ENCODE measurements at regions of chr6 and their contacts with region 1.

Region 1: DNA sequence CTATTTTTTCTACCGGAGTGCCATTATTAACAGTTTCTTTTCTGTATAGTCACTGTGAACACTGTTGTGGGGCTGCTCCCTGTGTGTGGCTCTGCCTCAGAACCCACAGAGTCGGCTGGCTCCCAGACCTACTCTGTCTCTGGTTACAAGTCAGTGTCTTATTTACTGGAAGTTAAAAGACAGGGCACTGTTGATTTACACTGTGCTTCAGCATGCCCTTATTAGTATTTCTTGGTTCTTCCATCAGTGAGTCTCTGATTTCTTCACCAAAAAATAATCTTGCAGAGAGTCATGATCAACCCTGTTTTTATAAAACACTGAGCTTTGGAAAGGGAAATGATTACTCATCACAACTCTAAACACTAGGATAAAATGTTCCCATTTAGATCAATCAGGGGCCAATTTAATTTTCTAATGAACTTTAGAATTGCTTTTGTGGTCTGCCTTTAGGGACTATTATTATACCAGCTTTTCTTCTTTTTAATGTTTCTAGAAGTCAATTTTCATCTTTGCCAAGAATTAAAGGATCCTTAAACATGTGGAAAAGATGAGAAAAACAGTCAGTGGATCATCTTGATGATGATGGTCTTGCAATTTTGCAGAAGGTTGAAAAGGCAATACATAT is 92.6 kb downstream of the UTRN start:
- DNase-seq: no peak
- ATAC-seq: peak in 4 of 8 donors; percentile 19 to 42 (median 28)
- H3K4me3 ChIP-seq: no peak overlapping the region
- H3K27ac ChIP-seq: peak overlapping the region in 2 of 10 donors; percentile 4 to 17
- H3K4me1 ChIP-seq: peaks cover 0 to 75% (median 32%) of the 10 kb centered on the region in 9 donors
- H3K27me3 ChIP-seq: no peaks in the 10 kb centered on the region
- CTCF ChIP-seq: no peak

Region 2: GRCh38 chr6:144411332-144412190 is 33.9 kb after region 1 on chr6:
- intact Hi-C with region 1: loop called in 1 of 10 experiments (anchors 5 kb)
- DNase-seq: no peak
- ATAC-seq: no peak
- H3K4me3 ChIP-seq: no peak overlapping the region
- H3K27ac ChIP-seq: no peak overlapping the region
- H3K4me1 ChIP-seq: peaks cover 3 to 83% (median 46%) of the 10 kb centered on the region in 9 donors
- H3K27me3 ChIP-seq: no peaks in the 10 kb centered on the region
- CTCF ChIP-seq: no peak

Region 3: GRCh38 chr6:144423167-144423566 is 45.5 kb after region 1 on chr6:
- intact Hi-C with region 1: loop called in 2 of 10 experiments (anchors 5 to 10 kb)
- DNase-seq: no peak
- ATAC-seq: no peak
- H3K4me3 ChIP-seq: no peak overlapping the region
- H3K27ac ChIP-seq: no peak overlapping the region
- H3K4me1 ChIP-seq: peaks cover 0 to 49% (median 11%) of the 10 kb centered on the region in 9 donors
- H3K27me3 ChIP-seq: no peaks in the 10 kb centered on the region
- CTCF ChIP-seq: no peak

Measured in heart right ventricle (tissue), 16 donors.